ENCODE measurements at regions of chr5 and their contacts with region 1.

Region 1: DNA sequence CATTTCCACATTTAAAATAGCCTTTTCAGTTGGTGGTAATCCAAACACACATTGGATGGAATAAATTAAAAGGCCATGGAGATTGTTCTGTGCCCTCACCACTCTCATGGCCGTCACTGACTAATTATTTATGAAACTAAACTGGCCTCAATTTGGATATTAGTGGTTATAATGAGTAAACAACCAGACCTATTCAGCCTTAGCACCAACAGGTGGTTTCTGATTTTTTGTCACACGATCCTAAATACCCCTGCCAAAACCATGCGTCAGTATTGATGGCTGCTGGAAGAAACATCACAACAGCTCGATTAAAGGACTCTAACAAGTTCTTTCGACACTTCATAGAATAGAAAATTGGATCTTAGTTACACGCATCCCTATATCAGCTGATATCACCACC is 276.0 kb upstream of the DAP start:
- DNase-seq: no peak
- H3K4me3 ChIP-seq: no peak overlapping the region
- H3K27ac ChIP-seq: no peak overlapping the region
- H3K4me1 ChIP-seq: no peaks in the 10 kb centered on the region
- H3K27me3 ChIP-seq: no peaks in the 10 kb centered on the region
- CTCF ChIP-seq: no peak
- EP300 ChIP-seq: no peak
- POLR2A ChIP-seq: no peak

Region 2: DNA sequence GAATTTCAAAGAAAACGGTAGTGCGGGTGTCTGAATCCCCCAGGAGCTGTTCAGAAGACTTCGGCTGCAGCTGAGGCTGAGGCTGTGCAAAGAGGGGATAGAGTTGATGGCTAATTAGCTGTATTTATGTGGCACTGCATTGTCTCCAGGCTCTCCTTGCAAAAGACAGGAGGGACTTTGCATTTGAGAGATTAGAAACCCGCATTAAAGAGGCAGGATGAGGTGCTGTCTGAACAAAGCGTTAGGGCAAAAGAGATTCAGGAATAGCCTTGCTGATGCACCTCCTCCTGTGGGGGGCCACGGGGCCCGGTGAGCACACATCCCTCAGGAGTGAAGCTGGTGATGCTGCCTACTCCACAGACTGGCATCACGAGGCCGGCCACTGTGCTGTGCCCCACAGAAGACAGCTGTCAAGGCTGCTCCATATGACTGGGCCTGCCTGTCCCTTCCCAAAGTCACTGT is 67.6 kb after region 1 on chr5:
- in situ Hi-C with region 1: no loop called
- intact Hi-C with region 1: loop called (anchors 2 kb)
- DNase-seq: no peak
- H3K4me3 ChIP-seq: no peak overlapping the region
- H3K27ac ChIP-seq: no peak overlapping the region
- H3K4me1 ChIP-seq: no peaks in the 10 kb centered on the region
- H3K27me3 ChIP-seq: no peaks in the 10 kb centered on the region
- CTCF ChIP-seq: no peak
- EP300 ChIP-seq: no peak
- POLR2A ChIP-seq: no peak

Measured in transverse colon (tissue), 4 donors.